PC-3 (cell line): ENCODE measurements at regions of chr15 and their contacts with region 1.

Region 1: GRCh38 chr15:79596051-79596507 is 163.9 kb downstream of the MINAR1 start:
- DNase-seq: peak; percentile 94
- ATAC-seq: peak; percentile 90
- H3K4me3 ChIP-seq: no peak overlapping the region
- H3K27ac ChIP-seq: no peak overlapping the region
- H3K4me1 ChIP-seq: no peaks in the 10 kb centered on the region
- H3K27me3 ChIP-seq: peaks cover 17% of the 10 kb centered on the region
- CTCF ChIP-seq: peak; percentile 97

Region 2: DNA sequence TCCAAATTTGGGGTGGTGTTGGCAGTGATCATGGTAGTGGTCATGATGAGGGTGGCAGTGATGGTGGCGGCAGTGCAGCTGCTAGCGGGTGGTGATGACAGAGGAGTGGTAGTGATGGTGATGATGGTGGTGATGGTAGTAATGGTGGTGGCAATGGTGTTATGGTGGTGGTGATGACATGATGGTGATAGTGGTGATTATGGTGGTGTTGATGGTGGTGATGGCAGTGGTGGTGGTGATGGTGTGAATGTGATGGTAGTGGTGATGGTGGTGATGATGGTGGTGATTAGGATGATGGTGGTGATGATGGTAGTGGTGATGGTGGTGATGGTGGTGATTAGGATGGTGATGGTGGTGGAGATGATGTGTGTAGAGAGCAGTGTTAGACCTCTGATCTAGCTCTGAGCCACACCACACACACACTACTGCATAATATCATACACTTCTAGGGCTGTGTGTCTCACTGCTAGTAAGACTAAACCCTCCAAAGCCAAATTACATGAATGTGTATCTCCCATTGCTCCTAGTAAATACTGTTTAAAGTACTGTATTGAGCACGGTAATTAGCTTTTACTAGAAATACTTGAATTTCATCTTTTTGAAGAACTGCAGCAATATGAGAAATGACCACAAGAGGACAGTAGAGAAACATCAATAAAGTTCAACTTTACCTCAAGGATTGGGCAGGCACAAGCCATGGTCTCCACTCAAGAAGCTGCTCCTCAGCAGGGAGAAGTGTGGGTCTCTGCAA is 256.3 kb before region 1 on chr15:
- CTCF ChIA-PET with region 1: interaction called, 7 read pairs
- POLR2A ChIA-PET with region 1: no interaction called
- intact Hi-C with region 1: loop called (anchors 1 kb)
- DNase-seq: peak; percentile 66
- ATAC-seq: peak; percentile 27; the same call in 1 of the 2 replicates
- H3K4me3 ChIP-seq: no peak overlapping the region
- H3K27ac ChIP-seq: no peak overlapping the region
- H3K4me1 ChIP-seq: no peaks in the 10 kb centered on the region
- H3K27me3 ChIP-seq: no peaks in the 10 kb centered on the region
- CTCF ChIP-seq: peak; percentile 87

Region 3: GRCh38 chr15:79380755-79381497 is 215.2 kb before region 1 on chr15:
- CTCF ChIA-PET with region 1: interaction called, 18 read pairs
- POLR2A ChIA-PET with region 1: no interaction called
- intact Hi-C with region 1: loop called (anchors 1 kb)
- DNase-seq: peak; percentile 79
- ATAC-seq: peak; percentile 92
- H3K4me3 ChIP-seq: no peak overlapping the region
- H3K27ac ChIP-seq: no peak overlapping the region
- H3K4me1 ChIP-seq: no peaks in the 10 kb centered on the region
- H3K27me3 ChIP-seq: no peaks in the 10 kb centered on the region
- CTCF ChIP-seq: peak; percentile 93

Region 4: GRCh38 chr15:79615754-79616153 is 19.7 kb after region 1 on chr15:
- CTCF ChIA-PET with region 1: no interaction called
- POLR2A ChIA-PET with region 1: no interaction called
- intact Hi-C with region 1: no loop called
- DNase-seq: no peak
- ATAC-seq: no peak
- H3K4me3 ChIP-seq: no peak overlapping the region
- H3K27ac ChIP-seq: no peak overlapping the region
- H3K4me1 ChIP-seq: no peaks in the 10 kb centered on the region
- H3K27me3 ChIP-seq: peaks cover 24% of the 10 kb centered on the region
- CTCF ChIP-seq: no peak

Region 5: GRCh38 chr15:79989682-79990081 is 393.6 kb after region 1 on chr15:
- CTCF ChIA-PET with region 1: no interaction called
- POLR2A ChIA-PET with region 1: no interaction called
- intact Hi-C with region 1: no loop called
- DNase-seq: no peak
- ATAC-seq: no peak
- H3K4me3 ChIP-seq: no peak overlapping the region
- H3K27ac ChIP-seq: no peak overlapping the region
- H3K4me1 ChIP-seq: peaks cover 4% of the 10 kb centered on the region
- H3K27me3 ChIP-seq: no peaks in the 10 kb centered on the region
- CTCF ChIP-seq: no peak